Adrenal gland (tissue), 19 donors: ENCODE measurements at regions of chr17 and their contacts with region 1.

Region 1: DNA sequence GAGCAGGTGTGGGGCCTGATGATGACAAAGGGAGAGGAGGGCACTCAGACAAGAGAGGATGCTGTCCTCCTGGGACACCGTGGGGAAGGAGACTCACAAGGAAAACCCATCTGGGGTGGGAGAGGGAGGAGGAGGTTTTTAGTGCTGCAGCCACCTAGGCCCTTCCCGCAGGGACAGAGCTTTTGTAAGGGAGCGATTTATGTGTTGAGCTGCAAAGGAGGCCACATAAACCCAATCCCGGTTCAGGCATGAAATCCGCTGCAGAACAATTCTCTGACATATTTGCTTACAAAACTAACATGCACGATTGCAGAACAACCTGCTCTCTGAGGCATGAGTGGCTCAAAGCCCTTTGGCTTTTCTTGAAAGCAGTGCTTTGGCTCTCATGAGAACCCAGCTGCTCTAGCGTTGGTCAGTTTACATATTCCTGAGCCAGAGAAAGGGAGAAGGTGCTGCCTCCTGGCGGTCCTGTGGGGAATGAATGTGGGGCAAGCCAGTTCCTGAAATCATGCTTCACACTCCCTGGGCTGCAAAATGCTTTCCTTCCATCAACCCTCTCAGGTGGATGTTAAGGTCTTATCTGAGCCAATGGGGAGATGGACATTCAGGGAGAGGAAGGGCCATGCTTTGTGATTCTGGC is 122.4 kb upstream of the NLRP1 start:
- DNase-seq: peak; percentile 47 to 84 (median 65)
- H3K4me3 ChIP-seq: no peak overlapping the region
- H3K27ac ChIP-seq: no peak overlapping the region
- H3K4me1 ChIP-seq: no peaks in the 10 kb centered on the region
- H3K27me3 ChIP-seq: peaks cover 10% of the 10 kb centered on the region
- CTCF ChIP-seq: peak; percentile 52 to 74 (median 65)
- POLR2A ChIP-seq: no peak

Region 2: GRCh38 chr17:5592382-5592781 is 114.3 kb before region 1 on chr17:
- intact Hi-C with region 1: loop called (anchors 5 to 10 kb)
- DNase-seq: no peak
- H3K4me3 ChIP-seq: no peak overlapping the region
- H3K27ac ChIP-seq: no peak overlapping the region
- H3K4me1 ChIP-seq: no peaks in the 10 kb centered on the region
- H3K27me3 ChIP-seq: peaks cover 10% of the 10 kb centered on the region
- CTCF ChIP-seq: peak; percentile 43 to 68 (median 64)
- POLR2A ChIP-seq: no peak

Region 3: GRCh38 chr17:6421700-6422604 is 715.3 kb after region 1 on chr17:
- intact Hi-C with region 1: loop called in 1 of 2 experiments (anchors 10 kb)
- DNase-seq: peak; percentile 76 to 90 (median 83)
- H3K4me3 ChIP-seq: no peak overlapping the region
- H3K27ac ChIP-seq: no peak overlapping the region
- H3K4me1 ChIP-seq: no peaks in the 10 kb centered on the region
- H3K27me3 ChIP-seq: no peaks in the 10 kb centered on the region
- CTCF ChIP-seq: peak; percentile 78 to 90 (median 86)
- POLR2A ChIP-seq: no peak